Calu3 (cell line): ENCODE measurements at regions of chr1 and their contacts with region 1.

Region 1: GRCh38 chr1:238384381-238384780 is 493.7 kb upstream of the ZP4 start:
- DNase-seq: no peak
- H3K4me3 Mint-ChIP-seq: no peak overlapping the region
- H3K27ac Mint-ChIP-seq: peak overlapping the region; percentile 61
- H3K4me1 Mint-ChIP-seq: no peaks in the 10 kb centered on the region
- H3K27me3 Mint-ChIP-seq: no peaks in the 10 kb centered on the region
- CTCF ChIP-seq: no peak

Region 2: DNA sequence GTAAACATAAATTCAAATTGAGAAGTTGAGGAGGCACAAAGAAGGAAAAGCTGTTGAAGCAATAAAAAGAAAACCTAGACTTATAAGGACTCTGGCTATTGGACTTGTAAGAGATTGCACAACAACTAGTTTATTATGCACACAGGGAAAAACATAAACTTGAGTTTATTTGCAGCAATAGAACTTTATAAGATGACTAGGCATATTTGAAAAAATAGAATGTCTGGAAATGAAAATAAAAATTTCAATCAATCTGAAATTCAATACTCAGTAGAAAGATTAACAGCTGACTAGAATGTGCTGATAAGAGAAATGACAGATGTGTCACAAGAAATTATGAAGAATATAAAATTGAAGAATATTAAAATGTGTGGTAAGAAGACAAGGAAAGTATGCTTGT is 11.8 kb after region 1 on chr1:
- CTCF ChIA-PET with region 1: interaction called, 11 read pairs
- intact Hi-C with region 1: no loop called
- DNase-seq: no peak
- H3K4me3 Mint-ChIP-seq: no peak overlapping the region
- H3K27ac Mint-ChIP-seq: no peak overlapping the region
- H3K4me1 Mint-ChIP-seq: no peaks in the 10 kb centered on the region
- H3K27me3 Mint-ChIP-seq: no peaks in the 10 kb centered on the region
- CTCF ChIP-seq: no peak